ENCODE measurements at regions of chr9 and their contacts with region 1.

Region 1: GRCh38 chr9:4382722-4383317 is 83.0 kb upstream of the GLIS3 start:
- DNase-seq: no peak
- H3K4me3 ChIP-seq: no peak overlapping the region
- H3K27ac ChIP-seq: no peak overlapping the region
- H3K4me1 ChIP-seq: no peaks in the 10 kb centered on the region
- H3K27me3 ChIP-seq: no peaks in the 10 kb centered on the region
- CTCF ChIP-seq: peak; percentile 29 to 80 (median 67)
- POLR2A ChIP-seq: no peak

Region 2: DNA sequence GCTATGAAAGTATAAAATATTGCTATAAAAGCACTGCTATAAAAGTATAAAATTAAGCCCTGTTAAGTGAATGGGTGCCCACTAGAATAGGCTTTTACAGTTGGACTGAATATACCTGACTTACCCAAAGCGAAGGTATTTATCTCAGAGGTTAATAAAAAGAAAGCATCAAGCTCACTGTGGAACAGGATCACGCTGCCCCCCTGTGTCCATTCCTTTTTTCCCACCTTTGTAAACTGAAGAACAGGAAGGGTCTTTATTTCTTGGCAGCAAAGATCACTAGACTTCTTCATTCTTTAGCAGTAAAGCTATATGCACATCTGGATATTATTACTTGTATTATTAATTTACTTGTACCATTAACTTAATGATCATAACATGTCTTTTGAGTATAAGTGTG is 257.2 kb after region 1 on chr9:
- intact Hi-C with region 1: loop called (anchors 10 kb)
- DNase-seq: peak; percentile 58 to 59
- H3K4me3 ChIP-seq: no peak overlapping the region
- H3K27ac ChIP-seq: no peak overlapping the region
- H3K4me1 ChIP-seq: peaks cover 0 to 5% of the 10 kb centered on the region in 2 donors
- H3K27me3 ChIP-seq: no peaks in the 10 kb centered on the region
- CTCF ChIP-seq: peak; percentile 22 to 72 (median 58)
- POLR2A ChIP-seq: no peak

Region 3: GRCh38 chr9:4706971-4707622 is 324.3 kb after region 1 on chr9:
- intact Hi-C with region 1: no loop called
- DNase-seq: no peak
- H3K4me3 ChIP-seq: no peak overlapping the region
- H3K27ac ChIP-seq: no peak overlapping the region
- H3K4me1 ChIP-seq: no peaks in the 10 kb centered on the region
- H3K27me3 ChIP-seq: no peaks in the 10 kb centered on the region
- CTCF ChIP-seq: no peak
- POLR2A ChIP-seq: no peak

Measured in thyroid gland (tissue), 4 donors.